OCI-LY7 (cell line): ENCODE measurements at regions of chrX and their contacts with region 1.

Region 1: GRCh38 chrX:48897621-48898306 is at the starts of genes PQBP1 and TIMM17B:
- DNase-seq: peak; percentile 96
- H3K4me3 ChIP-seq: peak within 1 kb of the TSS; percentile 84
- H3K27ac ChIP-seq: peak within 1 kb of the TSS; percentile 87
- H3K4me1 ChIP-seq: peaks cover 19% of the 10 kb centered on the region
- CTCF ChIP-seq: no peak
- total RNA-seq, gene PQBP1: 72.7 and 90.5 TPM in 2 replicates
- total RNA-seq, gene TIMM17B: 54.3 and 83.3 TPM in 2 replicates

Region 2: DNA sequence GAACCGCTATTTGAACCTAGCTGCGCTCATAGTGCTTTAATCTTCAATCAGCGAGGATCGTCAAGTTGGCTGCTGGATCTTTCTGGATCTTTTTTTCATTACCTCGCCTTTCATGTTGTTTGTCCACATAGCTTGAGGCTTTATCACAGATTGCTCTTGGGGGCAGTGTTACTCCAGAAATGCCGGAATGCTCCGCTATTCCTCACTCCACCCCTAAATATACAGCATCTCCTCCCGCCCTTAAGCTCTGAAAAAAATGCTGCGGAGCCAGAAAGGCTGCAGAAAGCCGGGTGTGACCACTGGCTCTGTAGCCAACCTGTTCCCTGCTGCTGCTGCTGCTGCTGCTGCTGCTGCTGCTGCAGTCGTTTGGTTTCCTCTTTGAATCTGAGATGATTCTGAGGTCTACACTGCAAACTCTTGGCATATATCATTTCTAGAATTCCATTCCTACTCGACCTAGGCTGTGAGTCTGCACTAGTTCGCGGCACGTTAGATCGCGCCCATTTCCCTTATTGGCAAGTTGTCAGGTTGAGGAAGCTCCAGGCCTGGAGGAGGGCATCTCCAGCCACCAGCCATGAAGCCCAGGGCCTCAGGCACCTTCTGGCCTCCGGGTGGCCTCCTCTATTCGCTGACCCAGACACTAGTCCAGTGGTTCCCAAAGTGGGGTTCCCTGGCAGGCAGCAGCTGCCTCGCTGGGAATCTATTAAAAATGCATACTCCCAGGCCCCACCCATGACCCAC is 266.2 kb before region 1 on chrX:
- CTCF ChIA-PET with region 1: no interaction called
- POLR2A ChIA-PET with region 1: no interaction called
- intact Hi-C with region 1: loop called (anchors 5 kb)
- DNase-seq: peak; percentile 87
- H3K4me3 ChIP-seq: no peak overlapping the region
- H3K27ac ChIP-seq: peak overlapping the region; percentile 25
- H3K4me1 ChIP-seq: peaks cover 11% of the 10 kb centered on the region
- CTCF ChIP-seq: peak; percentile 70

Region 3: DNA sequence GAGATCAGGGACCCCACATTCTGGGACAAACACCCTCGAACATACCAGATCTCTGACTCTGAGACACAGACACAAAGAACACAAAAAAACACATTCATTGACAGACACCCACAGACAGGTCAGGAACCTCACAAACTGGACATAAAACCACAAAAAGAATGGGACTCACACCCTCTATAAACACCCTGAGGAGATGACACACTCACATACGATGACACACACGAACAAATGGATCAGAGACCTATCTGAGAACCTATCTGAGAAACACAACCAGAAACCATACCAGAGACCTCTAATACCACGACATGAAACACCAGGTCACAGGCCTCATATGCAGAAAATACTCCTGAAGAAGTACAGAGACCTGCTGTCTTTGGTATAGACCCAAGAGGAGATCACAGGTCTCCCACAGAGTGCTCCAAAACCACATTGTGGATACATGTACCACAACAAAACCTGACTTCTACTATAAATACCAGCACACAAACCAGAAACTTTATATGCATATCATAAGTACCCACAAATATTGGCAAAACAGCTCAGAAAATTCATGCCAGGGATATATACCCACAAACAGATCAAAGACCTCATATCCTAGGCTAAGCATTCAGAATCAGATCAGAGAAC is 181.8 kb before region 1 on chrX:
- CTCF ChIA-PET with region 1: no interaction called
- POLR2A ChIA-PET with region 1: no interaction called
- intact Hi-C with region 1: no loop called
- DNase-seq: no peak
- H3K4me3 ChIP-seq: no peak overlapping the region
- H3K27ac ChIP-seq: no peak overlapping the region
- H3K4me1 ChIP-seq: no peaks in the 10 kb centered on the region
- CTCF ChIP-seq: no peak

Region 4: DNA sequence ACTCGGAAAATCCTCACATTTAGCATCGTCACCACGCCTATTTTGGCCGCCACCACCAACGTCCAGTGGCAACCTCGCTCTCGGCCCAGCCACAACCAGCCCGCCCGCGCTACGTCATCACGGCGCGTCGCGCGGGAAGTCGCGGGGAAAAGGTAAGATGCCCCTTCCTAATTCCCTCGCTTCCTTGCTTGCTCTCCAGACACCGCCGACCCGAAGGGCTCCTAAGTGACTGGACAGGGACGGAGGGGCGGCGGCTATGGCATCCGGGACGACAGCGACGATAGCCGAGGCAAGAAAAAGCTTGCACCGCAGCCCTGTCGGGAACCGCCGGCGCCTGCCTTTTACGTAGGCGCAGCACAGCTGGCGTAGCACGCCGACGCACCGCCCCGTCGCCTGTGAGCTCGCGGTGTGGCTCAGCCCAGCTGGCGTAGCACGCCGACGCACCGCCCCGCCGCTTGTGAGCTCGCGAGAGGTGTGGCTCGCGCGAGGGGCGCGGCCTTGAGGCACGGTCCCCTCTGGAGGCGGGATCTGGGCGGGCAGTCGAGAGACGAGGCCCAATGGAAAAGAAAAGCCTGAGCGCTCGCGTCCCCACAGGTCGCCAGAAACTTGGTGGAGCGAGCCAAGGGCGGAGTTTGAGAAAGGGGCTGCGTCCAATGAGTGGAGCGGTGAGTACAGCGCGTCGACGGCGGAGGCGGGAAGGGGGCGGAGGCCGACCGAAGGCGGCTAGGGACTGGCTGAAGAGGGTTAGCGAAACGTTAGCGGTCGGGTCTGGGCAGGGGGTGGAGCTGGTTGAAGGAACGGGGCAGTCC is 96.3 kb before region 1 on chrX and contains the start of gene HDAC6:
- CTCF ChIA-PET with region 1: no interaction called
- POLR2A ChIA-PET with region 1: no interaction called
- intact Hi-C with region 1: loop called (anchors 10 kb)
- DNase-seq: peak; percentile 98
- H3K4me3 ChIP-seq: peak within 1 kb of the TSS; percentile 77
- H3K27ac ChIP-seq: peak within 1 kb of the TSS; percentile 86
- H3K4me1 ChIP-seq: peaks cover 18% of the 10 kb centered on the region
- CTCF ChIP-seq: no peak
- total RNA-seq, gene HDAC6: 62.0 and 73.6 TPM in 2 replicates

Region 5: DNA sequence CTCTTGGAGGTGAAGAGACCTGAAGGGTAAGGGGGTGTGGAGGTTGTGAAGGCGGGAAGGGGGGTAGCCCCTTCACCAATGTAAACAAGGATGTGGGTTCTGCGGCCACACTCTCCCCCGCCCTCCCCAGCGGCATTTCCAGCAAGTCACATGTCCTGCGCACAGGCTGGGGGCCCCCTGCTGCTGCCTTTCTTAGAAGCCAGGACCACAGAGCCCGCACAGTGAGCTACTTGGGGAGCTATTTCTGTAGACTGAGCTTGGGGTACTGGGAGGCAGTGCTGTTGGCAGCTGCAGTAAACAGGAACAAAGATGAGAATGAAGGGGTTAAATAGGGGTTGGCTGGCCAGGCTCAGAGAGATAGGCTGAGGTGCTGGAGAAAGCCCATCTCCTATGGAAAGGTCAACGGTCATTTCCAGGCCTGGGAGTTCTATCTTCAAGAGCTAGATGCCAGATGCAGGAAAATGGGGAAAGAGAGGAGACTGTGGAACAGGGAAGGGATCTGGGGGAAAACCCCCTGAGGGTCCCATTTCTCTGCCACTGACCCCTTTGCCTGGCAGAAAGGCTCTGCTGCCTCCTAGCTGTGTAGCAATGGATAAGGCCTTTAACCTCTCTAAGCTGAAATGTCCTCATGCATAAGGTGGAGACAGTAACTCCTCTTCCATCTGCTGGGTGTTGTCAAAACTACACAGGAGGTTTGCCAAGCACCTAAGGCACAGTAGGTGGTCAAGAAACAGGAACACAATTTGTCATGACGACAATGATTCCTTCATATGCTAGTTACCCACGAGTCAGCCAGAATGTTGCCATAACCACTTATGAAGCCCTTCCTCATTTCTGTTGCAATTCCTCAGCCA is 39.5 kb after region 1 on chrX:
- CTCF ChIA-PET with region 1: no interaction called
- POLR2A ChIA-PET with region 1: interaction called, 3 read pairs
- intact Hi-C with region 1: loop called (anchors 5 kb)
- DNase-seq: peak; percentile 91
- H3K4me3 ChIP-seq: peak overlapping the region; percentile 60
- H3K27ac ChIP-seq: peak overlapping the region; percentile 100
- H3K4me1 ChIP-seq: peaks cover 89% of the 10 kb centered on the region
- CTCF ChIP-seq: peak; percentile 74

Region 6: GRCh38 chrX:49043220-49043986 is 145.6 kb after region 1 on chrX and contains the start of gene TFE3:
- CTCF ChIA-PET with region 1: interaction called, 4 read pairs
- POLR2A ChIA-PET with region 1: no interaction called
- intact Hi-C with region 1: loop called (anchors 5 kb)
- DNase-seq: peak; percentile 98
- H3K4me3 ChIP-seq: peak within 1 kb of the TSS; percentile 84
- H3K27ac ChIP-seq: peak within 1 kb of the TSS; percentile 55
- H3K4me1 ChIP-seq: peaks cover 45% of the 10 kb centered on the region
- CTCF ChIP-seq: peak; percentile 73
- total RNA-seq, gene TFE3: 7.6 and 10.2 TPM in 2 replicates